ENCODE measurements at regions of chr16 and their contacts with region 1.

Region 1: DNA sequence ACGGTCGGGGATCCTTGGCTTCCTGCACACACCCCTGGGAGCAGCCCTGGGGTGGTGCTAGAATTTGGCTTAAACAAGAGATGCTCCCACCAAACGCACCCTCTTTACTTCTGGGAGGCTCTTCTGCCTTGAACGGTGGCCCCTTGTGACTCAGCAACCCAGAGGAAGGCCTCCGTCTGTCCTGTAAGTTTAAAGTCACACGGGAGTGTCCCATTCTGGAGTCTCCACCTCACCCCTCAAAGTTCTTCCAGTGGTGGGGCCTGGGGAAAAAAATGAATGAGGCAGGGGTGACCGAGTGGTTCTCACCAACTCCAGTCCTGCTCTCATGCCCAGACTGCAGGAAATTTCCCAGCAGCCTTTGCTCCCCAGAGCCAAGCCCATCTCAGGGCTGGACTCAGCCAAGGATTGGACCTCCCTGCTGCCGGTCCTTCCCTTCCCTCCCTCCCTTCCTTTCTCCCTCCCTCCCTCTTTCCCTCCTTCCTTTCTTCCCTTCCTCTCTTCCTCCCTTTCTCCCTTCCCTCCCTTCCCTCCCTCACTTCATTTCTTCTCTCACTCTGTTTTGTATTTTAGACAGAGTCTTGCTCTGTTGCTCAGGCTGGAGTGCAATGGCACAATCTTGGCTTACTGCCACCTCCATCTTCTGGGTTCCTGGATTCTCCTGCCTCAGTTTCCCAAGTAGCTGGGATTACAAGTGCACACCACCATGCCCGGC is 11.4 kb downstream of the ITGAD start:
- DNase-seq: no peak
- ATAC-seq: peak in 3 of 8 donors; percentile 43 to 65 (median 54)
- H3K4me3 ChIP-seq: peak overlapping the region in 5 of 10 donors; percentile 20 to 53 (median 26)
- H3K27ac ChIP-seq: no peak overlapping the region
- H3K4me1 ChIP-seq: peaks cover 0 to 16% (median 0%) of the 10 kb centered on the region in 9 donors
- H3K27me3 ChIP-seq: peaks cover 0 to 8% (median 4%) of the 10 kb centered on the region in 7 donors
- CTCF ChIP-seq: no peak

Region 2: GRCh38 chr16:31253642-31254045 is 150.9 kb before region 1 on chr16:
- intact Hi-C with region 1: loop called in 1 of 10 experiments (anchors 10 kb)
- DNase-seq: peak in 1 of 2 donors; percentile 14
- ATAC-seq: peak; percentile 22 to 88 (median 54)
- H3K4me3 ChIP-seq: no peak overlapping the region
- H3K27ac ChIP-seq: peak overlapping the region in 4 of 10 donors; percentile 14 to 88 (median 27)
- H3K4me1 ChIP-seq: peaks cover 0 to 32% (median 0%) of the 10 kb centered on the region in 9 donors
- H3K27me3 ChIP-seq: peaks cover 0 to 22% (median 5%) of the 10 kb centered on the region in 7 donors
- CTCF ChIP-seq: no peak

Region 3: GRCh38 chr16:31507929-31508705 is 103.6 kb after region 1 on chr16 and contains the start of gene RUSF1:
- intact Hi-C with region 1: no loop called
- DNase-seq: peak; percentile 92 to 93
- ATAC-seq: peak; percentile 96 to 97 (median 97)
- H3K4me3 ChIP-seq: peak within 1 kb of the TSS; percentile 79 to 98 (median 88)
- H3K27ac ChIP-seq: peak within 1 kb of the TSS; percentile 83 to 99 (median 95)
- H3K4me1 ChIP-seq: peaks cover 5 to 58% (median 48%) of the 10 kb centered on the region in 9 donors
- H3K27me3 ChIP-seq: no peaks in the 10 kb centered on the region
- CTCF ChIP-seq: no peak
- total RNA-seq, gene RUSF1: 21.9 to 28.0 (median 24.4) TPM